PC-9 (cell line): ENCODE measurements at regions of chr1 and their contacts with region 1.

Region 1: GRCh38 chr1:167082511-167083027 is 7.6 kb downstream of the GPA33 start:
- DNase-seq: peak; percentile 70 to 93
- H3K4me3 ChIP-seq: peak overlapping the region; percentile 27; the same call in 1 of the 2 replicates
- H3K27ac ChIP-seq: peak overlapping the region; percentile 87
- H3K4me1 ChIP-seq: peaks cover 40% of the 10 kb centered on the region
- H3K27me3 ChIP-seq: no peaks in the 10 kb centered on the region
- CTCF ChIP-seq: no peak

Region 2: DNA sequence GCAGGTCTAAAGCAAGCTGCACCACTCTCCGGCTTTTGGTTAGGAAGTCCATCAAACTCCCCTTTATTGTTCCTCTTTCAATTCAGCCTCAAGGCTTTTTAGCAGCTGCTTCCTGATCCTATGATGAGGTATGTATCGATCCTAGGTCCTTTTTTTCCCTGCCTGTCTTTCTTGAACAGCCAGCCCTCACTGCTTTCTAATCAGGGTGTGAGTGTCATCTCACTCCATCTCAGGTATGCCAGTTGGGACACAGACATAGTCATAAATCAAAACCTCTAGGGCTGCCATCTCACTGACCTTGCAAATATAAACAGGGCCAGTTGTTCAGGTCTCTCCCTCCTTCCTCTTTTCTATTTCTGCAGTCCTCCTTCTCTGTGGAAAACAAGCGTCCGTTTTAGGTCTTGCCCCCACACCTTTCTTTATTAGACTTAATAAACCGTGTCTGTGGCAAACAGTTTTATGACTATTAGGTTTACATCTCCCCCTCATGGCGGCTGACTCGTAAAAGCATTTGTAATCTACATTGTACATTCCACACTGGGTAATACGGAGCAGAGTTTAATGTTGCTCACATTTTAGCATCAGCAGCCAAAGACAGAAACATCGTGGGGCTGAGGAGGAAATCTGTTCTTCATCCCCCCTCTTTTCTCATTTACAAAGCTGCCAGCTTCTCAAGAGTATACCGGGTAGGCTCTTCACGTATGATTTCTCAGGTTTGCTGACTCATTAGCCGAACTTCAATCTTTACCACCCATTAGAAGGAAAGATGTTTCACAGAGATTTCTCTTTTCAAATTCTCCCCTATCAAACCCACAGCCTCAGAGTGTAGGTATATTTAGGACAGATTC is 22.9 kb after region 1 on chr1:
- CTCF ChIA-PET with region 1: no interaction called
- POLR2A ChIA-PET with region 1: interaction called, 11 read pairs
- intact Hi-C with region 1: no loop called
- DNase-seq: peak in 1 of 2 experiments; percentile 68
- H3K4me3 ChIP-seq: no peak overlapping the region
- H3K27ac ChIP-seq: 0 out of 2 replicates have a peak overlapping the region, but pooled peaks have one; percentile 2
- H3K4me1 ChIP-seq: peaks cover 75% of the 10 kb centered on the region
- H3K27me3 ChIP-seq: no peaks in the 10 kb centered on the region
- CTCF ChIP-seq: no peak

Region 3: DNA sequence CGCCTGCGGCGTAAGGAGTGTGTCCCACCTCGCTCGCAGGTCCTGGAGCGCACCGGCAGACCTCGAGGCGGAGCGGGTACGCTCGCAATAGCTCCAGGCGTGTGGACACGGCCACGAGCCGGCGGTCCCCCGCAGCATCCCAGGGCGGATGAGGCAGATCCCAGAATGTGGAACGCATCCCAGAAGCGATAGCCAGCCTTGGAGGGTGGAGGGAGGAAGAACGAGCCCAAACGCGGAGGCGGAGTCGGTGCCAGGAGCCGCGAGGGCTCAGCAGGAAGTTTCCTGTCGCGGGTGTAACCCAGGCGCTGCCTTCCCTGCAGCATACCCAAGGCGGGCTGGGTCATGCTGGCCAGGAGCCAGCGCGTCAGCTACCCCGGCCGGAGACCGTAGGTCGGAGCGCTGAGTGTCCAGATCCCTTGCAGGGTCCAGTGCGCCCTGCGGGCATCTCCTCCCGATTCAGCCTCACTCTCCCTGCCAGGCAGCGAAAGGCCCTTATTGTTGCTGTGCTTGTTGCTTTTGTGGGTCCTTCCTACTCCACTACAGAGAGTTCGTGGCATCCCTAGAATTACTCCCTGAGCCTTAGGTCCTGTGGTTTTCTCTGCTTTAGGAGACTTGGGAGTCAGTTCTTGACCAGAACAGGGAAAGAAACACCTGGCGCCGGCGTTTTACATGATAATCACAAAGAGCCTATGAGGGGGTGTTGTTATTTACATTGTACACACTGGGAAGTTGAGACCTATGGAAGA is 39.0 kb after region 1 on chr1:
- CTCF ChIA-PET with region 1: interaction called, 5 read pairs
- POLR2A ChIA-PET with region 1: no interaction called
- intact Hi-C with region 1: loop called (anchors 1 kb)
- DNase-seq: peak; percentile 76 to 88
- H3K4me3 ChIP-seq: peak overlapping the region; percentile 91
- H3K27ac ChIP-seq: peak overlapping the region; percentile 59
- H3K4me1 ChIP-seq: peaks cover 18% of the 10 kb centered on the region; the same call in 1 of the 2 replicates
- H3K27me3 ChIP-seq: no peaks in the 10 kb centered on the region
- CTCF ChIP-seq: no peak